Transverse colon (tissue), 4 donors: ENCODE measurements at regions of chr6 and their contacts with region 1.

Region 1: DNA sequence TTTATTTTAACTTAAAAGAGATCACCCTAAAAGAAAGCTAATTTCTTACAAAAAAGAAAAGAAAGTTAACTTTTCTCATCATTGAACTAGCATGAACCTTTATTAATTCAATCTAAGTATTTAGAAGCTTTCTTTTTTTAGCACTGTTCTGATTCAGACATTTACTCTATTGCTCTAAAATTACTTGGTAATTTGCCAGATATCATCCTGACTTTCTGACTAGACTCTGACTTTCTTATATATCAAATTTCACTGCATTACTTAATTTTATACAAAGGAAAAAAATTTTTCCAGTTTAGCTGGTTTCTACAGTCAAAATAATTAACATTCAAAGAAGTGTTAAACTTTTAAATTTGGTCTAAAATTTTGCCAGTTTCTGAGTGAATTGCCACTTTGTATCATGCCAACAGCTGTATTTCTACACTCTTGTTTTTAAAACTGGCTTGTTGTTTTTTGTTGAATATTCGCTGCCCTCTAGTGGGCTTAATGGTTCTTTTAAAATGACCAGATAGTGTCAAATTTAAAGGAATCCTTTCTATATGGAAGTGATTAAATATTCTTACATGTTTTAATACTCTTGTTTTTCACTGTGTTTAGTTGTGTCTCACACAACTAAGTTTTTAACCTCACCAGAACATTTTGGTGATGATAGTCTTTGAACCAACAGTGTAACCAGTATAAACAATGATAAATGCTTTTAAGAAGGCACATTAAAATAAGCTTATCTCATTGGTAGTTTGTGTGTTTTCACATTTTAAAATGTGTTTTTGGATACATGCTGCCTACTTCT is 102.0 kb downstream of the POPDC3 start:
- DNase-seq: no peak
- H3K4me3 ChIP-seq: no peak overlapping the region
- H3K27ac ChIP-seq: no peak overlapping the region
- H3K4me1 ChIP-seq: peaks cover 0 to 13% (median 0%) of the 10 kb centered on the region in 4 donors
- H3K27me3 ChIP-seq: peaks cover 4% of the 10 kb centered on the region
- CTCF ChIP-seq: peak; percentile 38 to 50 (median 45)
- EP300 ChIP-seq: no peak
- POLR2A ChIP-seq: no peak

Region 2: DNA sequence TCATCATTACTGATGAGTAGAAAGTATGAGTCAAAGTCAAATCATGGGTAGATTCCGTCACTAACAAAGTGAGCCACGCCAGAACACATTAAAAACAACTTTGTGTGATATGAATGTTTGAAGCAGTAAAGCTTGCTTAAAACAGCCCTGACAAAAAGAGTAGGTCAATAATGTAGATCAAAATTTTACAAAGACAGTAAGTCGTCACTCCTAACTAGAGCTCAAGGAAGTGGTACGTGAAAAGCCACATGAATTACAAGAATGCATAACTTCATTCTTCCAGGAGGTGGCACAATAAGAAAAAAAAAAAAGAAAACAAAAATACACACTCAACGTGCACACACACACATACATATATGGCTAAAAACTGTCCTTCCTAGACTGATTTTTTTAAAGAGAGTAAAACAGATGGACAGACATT is 288.0 kb before region 1 on chr6:
- in situ Hi-C with region 1: loop called in 1 of 4 experiments (anchors 25 kb)
- intact Hi-C with region 1: no loop called
- DNase-seq: no peak
- H3K4me3 ChIP-seq: no peak overlapping the region
- H3K27ac ChIP-seq: no peak overlapping the region
- H3K4me1 ChIP-seq: no peaks in the 10 kb centered on the region
- H3K27me3 ChIP-seq: no peaks in the 10 kb centered on the region
- CTCF ChIP-seq: peak in 4 of 5 experiments; percentile 33 to 34 (median 33)
- EP300 ChIP-seq: no peak
- POLR2A ChIP-seq: no peak

Region 3: GRCh38 chr6:104995989-104996617 is 81.7 kb before region 1 on chr6:
- in situ Hi-C with region 1: loop called in 1 of 4 experiments (anchors 10 kb)
- intact Hi-C with region 1: loop called (anchors 10 kb)
- DNase-seq: no peak
- H3K4me3 ChIP-seq: no peak overlapping the region
- H3K27ac ChIP-seq: peak overlapping the region; percentile 3 to 76 (median 56)
- H3K4me1 ChIP-seq: peaks cover 0 to 9% (median 0%) of the 10 kb centered on the region in 4 donors
- H3K27me3 ChIP-seq: no peaks in the 10 kb centered on the region
- CTCF ChIP-seq: peak in 3 of 5 experiments; percentile 7 to 23 (median 7)
- EP300 ChIP-seq: no peak
- POLR2A ChIP-seq: no peak

Region 4: GRCh38 chr6:105024803-105025202 is 53.0 kb before region 1 on chr6:
- in situ Hi-C with region 1: no loop called
- intact Hi-C with region 1: no loop called
- DNase-seq: no peak
- H3K4me3 ChIP-seq: no peak overlapping the region
- H3K27ac ChIP-seq: no peak overlapping the region
- H3K4me1 ChIP-seq: no peaks in the 10 kb centered on the region
- H3K27me3 ChIP-seq: no peaks in the 10 kb centered on the region
- CTCF ChIP-seq: no peak
- EP300 ChIP-seq: no peak
- POLR2A ChIP-seq: no peak

Region 5: DNA sequence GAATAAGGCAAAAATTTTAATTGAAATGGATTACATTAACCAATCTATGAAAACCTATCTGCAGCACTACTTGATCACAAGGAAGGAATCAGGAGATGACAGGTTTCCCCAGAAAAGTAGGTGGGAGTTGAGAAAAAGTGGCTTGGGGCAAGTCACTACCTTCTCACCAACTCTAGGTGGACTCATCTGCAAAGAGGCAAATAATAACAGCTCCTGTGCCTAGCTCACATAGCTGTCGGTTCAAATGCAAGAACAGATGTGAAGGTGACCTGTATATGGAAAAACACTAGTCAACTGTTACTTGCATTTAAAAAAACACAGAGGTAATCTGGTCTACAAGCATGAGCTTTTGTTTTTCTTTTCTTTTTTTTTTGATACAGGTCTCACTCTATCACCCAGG is 34.8 kb after region 1 on chr6:
- in situ Hi-C with region 1: no loop called
- intact Hi-C with region 1: no loop called
- DNase-seq: no peak
- H3K4me3 ChIP-seq: no peak overlapping the region
- H3K27ac ChIP-seq: no peak overlapping the region
- H3K4me1 ChIP-seq: peaks cover 0 to 11% (median 4%) of the 10 kb centered on the region in 4 donors
- H3K27me3 ChIP-seq: no peaks in the 10 kb centered on the region
- CTCF ChIP-seq: no peak
- EP300 ChIP-seq: no peak
- POLR2A ChIP-seq: no peak

Region 6: GRCh38 chr6:105136431-105137350 is 58.9 kb after region 1 on chr6:
- in situ Hi-C with region 1: no loop called
- intact Hi-C with region 1: no loop called
- DNase-seq: peak; percentile 55
- H3K4me3 ChIP-seq: peak overlapping the region; percentile 37 to 82 (median 71)
- H3K27ac ChIP-seq: peak overlapping the region; percentile 76 to 89 (median 82)
- H3K4me1 ChIP-seq: peaks cover 0 to 9% (median 3%) of the 10 kb centered on the region in 4 donors
- H3K27me3 ChIP-seq: peaks cover 33% of the 10 kb centered on the region
- CTCF ChIP-seq: peak; percentile 10 to 34 (median 20)
- EP300 ChIP-seq: no peak
- POLR2A ChIP-seq: no peak

Region 7: GRCh38 chr6:105192707-105193465 is 115.1 kb after region 1 on chr6:
- in situ Hi-C with region 1: no loop called
- intact Hi-C with region 1: no loop called
- DNase-seq: no peak
- H3K4me3 ChIP-seq: no peak overlapping the region
- H3K27ac ChIP-seq: no peak overlapping the region
- H3K4me1 ChIP-seq: no peaks in the 10 kb centered on the region
- H3K27me3 ChIP-seq: no peaks in the 10 kb centered on the region
- CTCF ChIP-seq: no peak
- EP300 ChIP-seq: no peak
- POLR2A ChIP-seq: no peak